Activated naive CD4-positive, alpha-beta T cell treated with anti-CD3 and anti-CD28 coated beads for 36 hours (primary cell): ENCODE measurements at regions of chr15 and their contacts with region 1.

Region 1: DNA sequence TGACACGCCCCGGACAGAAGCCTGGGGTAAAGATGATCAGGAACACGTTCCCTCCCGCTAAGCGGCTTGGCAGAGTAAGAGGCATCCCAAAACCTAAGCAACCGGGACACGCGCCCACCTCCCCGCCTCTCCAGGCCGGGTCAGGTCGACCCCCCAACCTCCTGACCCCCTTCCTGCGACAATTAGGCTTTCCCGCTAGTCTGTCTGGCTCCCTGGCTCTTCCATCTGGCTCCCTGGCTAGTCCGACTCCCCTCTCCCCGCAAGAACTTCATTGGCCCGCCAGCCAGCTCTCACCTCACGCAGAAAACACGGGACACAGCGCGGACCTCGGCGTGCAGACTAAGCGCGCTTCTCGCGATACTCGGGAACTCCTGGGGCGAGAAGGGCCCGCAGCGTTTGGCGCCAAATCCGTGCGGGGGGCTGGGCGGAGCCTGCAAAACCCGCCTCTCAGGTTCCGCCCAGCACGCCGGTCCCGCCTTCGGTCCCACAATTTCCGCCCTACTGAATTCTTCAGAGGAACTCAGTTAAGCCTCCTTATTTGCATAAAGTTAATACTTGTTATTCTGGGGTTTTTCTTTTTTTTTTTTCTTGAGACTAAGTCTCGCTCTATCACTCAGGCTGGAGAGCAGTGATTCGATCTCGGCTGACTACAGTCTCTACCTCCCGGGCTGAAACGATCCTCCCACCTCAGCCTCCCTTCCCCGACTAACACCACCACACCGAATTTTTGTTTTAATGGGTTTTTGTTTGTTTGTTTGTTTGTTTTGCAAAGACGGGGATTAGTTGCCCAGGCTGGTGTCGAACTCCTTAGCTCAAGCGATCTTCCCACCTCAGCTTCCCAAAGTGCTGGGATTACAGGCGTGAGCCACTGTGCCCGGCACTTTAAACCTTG is at the start of gene TIPIN:
- DNase-seq: peak; percentile 99
- H3K4me3 Mint-ChIP-seq: peak within 1 kb of the TSS; percentile 96
- H3K27ac Mint-ChIP-seq: peak within 1 kb of the TSS; percentile 95
- H3K4me1 Mint-ChIP-seq: peaks cover 37% of the 10 kb centered on the region
- H3K27me3 Mint-ChIP-seq: no peaks in the 10 kb centered on the region
- total RNA-seq, gene TIPIN: 33.8 to 34.7 TPM

Region 2: DNA sequence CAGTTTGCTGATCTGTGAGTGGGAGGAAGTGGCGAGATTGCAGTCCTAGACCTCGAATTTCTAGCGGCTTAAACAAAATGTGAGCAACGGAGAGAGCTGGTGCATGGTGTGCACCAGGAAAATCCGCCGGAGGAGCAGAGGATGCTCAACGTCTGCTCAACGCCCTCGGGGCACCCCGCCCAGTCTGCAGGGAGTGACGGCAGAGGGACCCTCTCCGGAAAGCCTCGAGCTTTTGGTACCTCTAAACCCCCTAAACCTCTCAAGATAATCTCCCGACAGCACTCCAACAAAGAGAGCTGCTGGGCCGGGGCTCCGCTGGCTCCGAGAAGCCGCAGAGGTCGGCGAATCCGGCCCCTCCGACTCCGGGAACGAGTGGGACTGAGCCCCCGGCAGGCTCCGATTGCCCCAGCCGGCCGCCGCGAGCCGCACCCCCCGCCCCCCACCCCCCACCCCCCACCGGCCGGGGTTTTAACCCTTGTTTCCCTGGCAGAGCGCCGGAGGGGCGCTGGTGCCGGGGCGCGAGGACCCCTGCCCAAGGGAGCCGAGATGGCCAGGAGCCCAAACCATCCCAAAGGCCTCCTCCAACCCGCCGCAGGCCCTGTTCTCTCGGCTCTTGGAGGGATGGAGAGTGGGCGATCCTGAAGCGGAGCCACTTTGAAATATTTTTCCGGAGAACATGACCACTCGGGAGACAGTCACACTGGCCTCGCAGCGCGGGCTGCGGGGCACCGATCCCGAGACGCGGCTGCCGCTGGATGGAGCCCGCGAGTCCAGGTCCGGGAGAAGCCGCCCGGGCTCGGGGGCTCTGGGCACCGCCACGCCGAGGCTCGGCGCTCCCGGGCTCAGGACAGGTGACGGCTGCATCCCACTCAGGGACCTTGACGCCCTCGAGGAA is 104.6 kb before region 1 on chr15:
- CTCF ChIA-PET with region 1: no interaction called
- intact Hi-C with region 1: no loop called
- DNase-seq: peak; percentile 64
- H3K4me3 Mint-ChIP-seq: peak overlapping the region; percentile 65
- H3K27ac Mint-ChIP-seq: no peak overlapping the region
- H3K4me1 Mint-ChIP-seq: peaks cover 10% of the 10 kb centered on the region
- H3K27me3 Mint-ChIP-seq: peaks cover 56% of the 10 kb centered on the region

Region 3: DNA sequence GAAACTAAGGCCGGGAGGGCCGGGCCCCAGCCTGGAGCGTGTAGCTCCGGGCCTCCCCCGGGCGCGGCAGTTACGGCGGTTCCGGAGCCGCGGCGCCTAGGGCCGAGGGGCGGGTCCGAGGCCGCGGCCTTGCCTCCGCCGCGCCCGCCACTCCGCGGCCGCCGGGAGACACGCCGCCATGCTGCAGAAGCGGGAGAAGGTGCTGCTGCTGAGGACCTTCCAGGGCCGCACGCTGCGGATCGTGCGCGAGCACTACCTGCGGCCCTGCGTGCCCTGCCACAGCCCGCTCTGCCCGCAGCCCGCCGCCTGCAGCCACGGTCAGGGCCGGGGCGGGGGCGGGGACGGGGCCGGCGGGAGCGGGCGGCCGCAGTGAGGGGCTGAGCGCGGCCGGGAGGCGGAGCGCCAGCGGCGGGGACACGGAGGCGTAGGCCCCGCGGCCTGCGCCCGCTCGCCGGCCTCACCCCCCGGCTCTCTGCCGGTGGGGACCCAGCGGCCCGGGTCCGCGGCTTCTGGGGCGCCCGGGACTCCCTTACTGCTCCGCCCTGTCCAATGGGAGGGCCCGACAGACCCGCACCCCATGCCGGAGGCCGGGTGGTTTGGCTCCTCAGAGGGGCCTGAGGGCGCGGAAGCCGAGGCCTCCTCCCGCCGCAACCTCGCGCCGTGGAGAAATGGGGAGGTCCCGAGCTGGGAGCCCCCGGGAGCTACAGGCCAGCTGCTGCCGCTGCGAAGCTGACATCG is 63.0 kb before region 1 on chr15 and contains the start of gene DIS3L:
- CTCF ChIA-PET with region 1: no interaction called
- intact Hi-C with region 1: loop called (anchors 1 kb)
- DNase-seq: peak; percentile 66
- H3K4me3 Mint-ChIP-seq: peak within 1 kb of the TSS; percentile 84
- H3K27ac Mint-ChIP-seq: peak within 1 kb of the TSS; percentile 92
- H3K4me1 Mint-ChIP-seq: peaks cover 38% of the 10 kb centered on the region
- H3K27me3 Mint-ChIP-seq: no peaks in the 10 kb centered on the region
- total RNA-seq, gene DIS3L: 24.0 to 24.6 TPM

Region 4: GRCh38 chr15:66401130-66402021 is 44.8 kb after region 1 on chr15:
- CTCF ChIA-PET with region 1: no interaction called
- intact Hi-C with region 1: loop called (anchors 1 kb)
- DNase-seq: peak; percentile 51
- H3K4me3 Mint-ChIP-seq: peak overlapping the region; percentile 59
- H3K27ac Mint-ChIP-seq: peak overlapping the region; percentile 81
- H3K4me1 Mint-ChIP-seq: peaks cover 77% of the 10 kb centered on the region
- H3K27me3 Mint-ChIP-seq: no peaks in the 10 kb centered on the region

Region 5: DNA sequence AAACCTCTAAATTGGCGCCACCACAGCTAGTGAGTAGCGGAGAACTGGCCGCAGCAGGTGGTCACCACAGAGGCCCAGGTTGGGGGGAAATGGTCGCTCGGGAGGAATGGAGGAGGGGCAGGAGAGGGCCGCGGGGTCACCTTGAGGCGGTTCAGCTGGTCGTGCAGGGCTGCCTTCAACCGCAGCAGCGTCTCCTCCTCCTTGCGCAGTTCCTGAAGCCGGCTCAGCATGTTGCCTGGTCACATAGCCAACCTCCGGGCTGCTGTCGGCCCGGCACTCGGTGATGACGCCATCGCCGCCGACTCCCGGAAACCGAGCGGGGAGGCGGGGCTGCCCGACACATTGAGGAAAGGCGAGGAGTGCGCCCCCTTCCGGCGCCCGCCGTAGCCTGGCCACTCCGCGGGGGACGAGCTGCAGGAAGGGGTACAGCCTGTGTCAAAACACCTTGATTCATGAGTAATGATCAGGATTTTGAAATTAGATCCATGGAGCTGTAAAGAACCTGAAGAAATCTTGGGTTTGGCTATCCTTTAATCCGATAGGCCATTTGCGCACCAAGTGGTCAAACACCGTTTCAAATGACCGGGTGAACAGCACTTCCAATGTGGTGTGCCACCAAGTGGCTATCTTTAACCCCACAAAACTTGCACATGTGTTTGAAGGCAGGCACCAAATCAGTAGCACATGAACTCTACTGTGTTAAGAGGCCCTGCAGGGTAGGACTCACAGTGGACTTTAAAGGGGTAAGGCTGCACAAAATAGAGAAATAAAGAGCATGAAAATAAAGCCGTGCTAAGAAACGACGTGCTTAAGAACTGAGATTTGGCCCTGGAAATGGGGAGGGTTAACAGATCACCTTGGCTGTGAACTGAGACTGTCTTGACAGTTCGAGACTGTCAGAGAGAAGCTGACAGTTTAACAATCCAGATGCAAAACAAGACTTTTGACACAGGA is 141.2 kb after region 1 on chr15 and contains the start of gene SNAPC5:
- CTCF ChIA-PET with region 1: interaction called, 28 read pairs
- intact Hi-C with region 1: loop called (anchors 1 kb)
- DNase-seq: peak; percentile 98
- H3K4me3 Mint-ChIP-seq: peak within 1 kb of the TSS; percentile 89
- H3K27ac Mint-ChIP-seq: peak within 1 kb of the TSS; percentile 95
- H3K4me1 Mint-ChIP-seq: peaks cover 60% of the 10 kb centered on the region
- H3K27me3 Mint-ChIP-seq: no peaks in the 10 kb centered on the region
- total RNA-seq, gene SNAPC5: 23.7 to 23.9 TPM